Activated T-helper 1 cell treated with anti-CD3 and anti-CD28 coated beads, Interleukin-12 subunit alpha, Interleukin-12 subunit beta, Interleukin-2, Interleukin-4 antibody, amounts not matched to agents 30 ng/mL and 10 ng/mL and 1 ng/mL, durations not matched to agents 14 hours and 24 hours and 36 hours (primary cell): ENCODE measurements at regions of chr5 and their contacts with region 1.

Region 1: GRCh38 chr5:33440482-33441240 is at the start of gene TARS1:
- DNase-seq: peak; percentile 93
- H3K4me3 Mint-ChIP-seq: no peak within 1 kb of the TSS
- H3K27ac Mint-ChIP-seq: no peak within 1 kb of the TSS
- H3K4me1 Mint-ChIP-seq: peaks cover 27% of the 10 kb centered on the region
- H3K27me3 Mint-ChIP-seq: no peaks in the 10 kb centered on the region
- total RNA-seq, gene TARS1: 184 and 191 TPM in 2 replicates

Region 2: GRCh38 chr5:32174011-32174870 is 1266.4 kb before region 1 on chr5 and contains the start of gene GOLPH3:
- intact Hi-C with region 1: loop called (anchors 1 kb)
- DNase-seq: peak; percentile 93
- H3K4me3 Mint-ChIP-seq: peak within 1 kb of the TSS; percentile 99
- H3K27ac Mint-ChIP-seq: peak within 1 kb of the TSS; percentile 99
- H3K4me1 Mint-ChIP-seq: peaks cover 31% of the 10 kb centered on the region
- H3K27me3 Mint-ChIP-seq: peaks cover 4% of the 10 kb centered on the region
- total RNA-seq, gene GOLPH3: 85.1 and 91.3 TPM in 2 replicates

Region 3: GRCh38 chr5:32585446-32586275 is 855.0 kb before region 1 on chr5 and contains the start of gene SUB1:
- intact Hi-C with region 1: loop called (anchors 5 kb)
- DNase-seq: peak; percentile 91
- H3K4me3 Mint-ChIP-seq: peak within 1 kb of the TSS; percentile 94
- H3K27ac Mint-ChIP-seq: peak within 1 kb of the TSS; percentile 99
- H3K4me1 Mint-ChIP-seq: peaks cover 70% of the 10 kb centered on the region
- H3K27me3 Mint-ChIP-seq: no peaks in the 10 kb centered on the region
- total RNA-seq, gene SUB1: 408 and 428 TPM in 2 replicates

Region 4: GRCh38 chr5:33840927-33841547 is 400.4 kb after region 1 on chr5:
- intact Hi-C with region 1: loop called (anchors 10 kb)
- DNase-seq: peak; percentile 6
- H3K4me3 Mint-ChIP-seq: no peak overlapping the region
- H3K27ac Mint-ChIP-seq: no peak overlapping the region
- H3K4me1 Mint-ChIP-seq: peaks cover 12% of the 10 kb centered on the region
- H3K27me3 Mint-ChIP-seq: peaks cover 14% of the 10 kb centered on the region

Region 5: GRCh38 chr5:34007621-34008600 is 567.2 kb after region 1 on chr5 and contains the start of gene AMACR:
- intact Hi-C with region 1: loop called (anchors 1 kb)
- DNase-seq: peak; percentile 87
- H3K4me3 Mint-ChIP-seq: peak within 1 kb of the TSS; percentile 85
- H3K27ac Mint-ChIP-seq: peak within 1 kb of the TSS; percentile 79
- H3K4me1 Mint-ChIP-seq: peaks cover 33% of the 10 kb centered on the region
- H3K27me3 Mint-ChIP-seq: no peaks in the 10 kb centered on the region
- total RNA-seq, gene AMACR: 6.8 and 7.1 TPM in 2 replicates

Region 6: DNA sequence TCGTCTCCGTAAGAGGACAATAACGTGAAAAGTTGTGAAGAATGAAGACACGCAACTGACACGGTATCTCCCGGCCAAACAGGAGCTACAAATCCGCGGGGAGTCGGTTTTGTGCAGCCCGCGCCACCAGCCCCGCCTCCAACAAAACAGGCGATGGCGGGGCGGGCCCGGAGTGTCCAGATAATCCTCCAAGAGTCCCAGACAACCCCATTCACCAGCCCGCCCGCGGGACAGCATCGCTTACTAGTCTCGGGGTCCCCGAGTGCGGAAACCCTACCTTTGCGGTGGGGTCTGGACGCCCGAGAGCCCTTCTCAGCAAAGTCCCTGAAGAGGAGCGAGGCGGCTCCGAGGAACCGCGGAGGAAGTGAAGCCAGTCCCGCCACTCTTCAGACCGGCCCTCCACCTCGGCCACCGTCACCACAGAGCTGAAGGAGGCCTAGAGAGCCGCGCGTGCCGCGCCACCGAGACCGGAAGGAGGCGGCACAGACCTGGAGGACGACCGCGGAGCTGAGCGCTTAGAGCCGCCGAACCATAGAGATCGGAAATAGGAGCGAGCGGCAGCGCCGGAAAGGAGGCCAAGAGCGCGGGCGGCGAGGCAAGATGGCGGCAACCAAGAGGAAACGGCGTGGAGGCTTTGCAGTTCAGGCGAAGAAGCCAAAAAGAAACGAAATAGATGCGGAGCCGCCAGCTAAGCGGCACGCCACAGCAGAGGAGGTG is 1474.6 kb after region 1 on chr5 and contains the starts of genes BRIX1 and RAD1:
- intact Hi-C with region 1: loop called (anchors 5 kb)
- DNase-seq: peak; percentile 94
- H3K4me3 Mint-ChIP-seq: no peak within 1 kb of the TSS
- H3K27ac Mint-ChIP-seq: peak within 1 kb of the TSS; percentile 74
- H3K4me1 Mint-ChIP-seq: peaks cover 35% of the 10 kb centered on the region
- H3K27me3 Mint-ChIP-seq: no peaks in the 10 kb centered on the region
- total RNA-seq, gene BRIX1: 110 TPM in 2 replicates
- total RNA-seq, gene RAD1: 45.7 and 47.1 TPM in 2 replicates